Ascending aorta (tissue), 2 donors: ENCODE measurements at regions of chr13 and their contacts with region 1.

Region 1: DNA sequence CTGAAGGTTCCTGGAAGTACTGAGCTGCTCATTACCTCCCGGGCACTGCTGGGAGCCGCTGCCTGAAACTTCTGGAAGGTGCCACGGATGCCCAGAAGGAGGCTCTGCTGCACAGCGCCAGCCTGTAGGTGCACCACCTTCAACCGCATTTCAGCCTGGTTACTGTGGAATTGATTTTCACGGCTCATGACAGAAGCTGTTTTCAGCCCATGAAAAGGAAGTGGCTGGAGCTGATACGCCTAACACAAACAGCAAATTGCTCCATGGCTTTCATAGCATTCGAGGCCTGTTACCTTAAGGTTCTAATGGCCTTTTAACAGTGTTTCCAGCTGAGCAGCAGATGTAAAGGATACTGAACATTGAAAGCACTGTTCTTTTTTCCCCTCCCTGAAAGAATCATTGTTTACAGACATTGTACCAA is 22.0 kb downstream of the GPC6 start:
- DNase-seq: peak in 1 of 2 donors; percentile 75
- H3K4me3 ChIP-seq: no peak overlapping the region
- H3K27ac ChIP-seq: peak overlapping the region in 1 of 2 donors; percentile 24
- H3K4me1 ChIP-seq: no peaks in the 10 kb centered on the region
- H3K27me3 ChIP-seq: no peaks in the 10 kb centered on the region
- CTCF ChIP-seq: peak in 1 of 3 experiments; percentile 33

Region 2: DNA sequence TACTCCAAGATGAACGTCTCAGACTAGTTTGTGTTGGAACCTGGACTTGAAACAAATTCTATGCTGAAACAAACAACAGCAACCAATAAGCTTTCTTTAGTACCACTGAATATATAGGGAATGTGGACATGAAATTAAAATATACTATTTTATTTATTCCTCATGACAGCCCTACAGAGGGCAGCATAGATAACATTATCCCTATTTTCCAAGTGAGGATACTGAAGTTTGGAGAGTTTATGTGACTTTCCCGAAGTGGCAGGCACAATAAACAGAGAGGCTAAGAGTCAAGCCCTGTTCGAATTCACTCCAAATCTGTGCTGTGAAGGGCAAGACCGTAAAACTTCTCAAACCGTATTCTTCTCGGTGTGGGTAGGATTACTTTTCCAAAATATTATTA is 531.9 kb before region 1 on chr13:
- intact Hi-C with region 1: loop called (anchors 5 kb)
- DNase-seq: no peak
- H3K4me3 ChIP-seq: no peak overlapping the region
- H3K27ac ChIP-seq: no peak overlapping the region
- H3K4me1 ChIP-seq: no peaks in the 10 kb centered on the region
- H3K27me3 ChIP-seq: no peaks in the 10 kb centered on the region
- CTCF ChIP-seq: peak in 2 of 3 experiments; percentile 28 to 32

Region 3: DNA sequence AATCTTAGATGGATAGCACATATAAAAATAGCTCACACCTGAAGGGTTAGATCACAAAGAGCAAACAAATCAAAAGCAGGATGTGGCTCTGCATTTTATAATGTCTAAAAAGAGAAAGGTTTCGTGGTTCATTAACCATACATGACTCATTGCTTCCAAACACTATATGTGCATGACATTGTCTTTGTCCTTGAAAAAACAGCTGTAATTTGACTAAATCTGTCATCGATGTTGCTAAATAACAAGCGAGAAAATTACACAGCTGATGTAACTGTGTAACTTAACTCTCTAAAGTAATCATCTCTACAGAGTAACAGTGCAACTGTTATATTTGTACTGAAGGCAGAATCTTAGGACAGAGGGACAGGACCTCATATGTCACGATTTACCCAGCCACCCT is 405.1 kb before region 1 on chr13:
- intact Hi-C with region 1: loop called (anchors 5 kb)
- DNase-seq: no peak
- H3K4me3 ChIP-seq: no peak overlapping the region
- H3K27ac ChIP-seq: no peak overlapping the region
- H3K4me1 ChIP-seq: peaks cover 0 to 20% of the 10 kb centered on the region in 2 donors
- H3K27me3 ChIP-seq: no peaks in the 10 kb centered on the region
- CTCF ChIP-seq: no peak

Region 4: GRCh38 chr13:93108111-93108601 is 140.5 kb before region 1 on chr13:
- intact Hi-C with region 1: no loop called
- DNase-seq: no peak
- H3K4me3 ChIP-seq: no peak overlapping the region
- H3K27ac ChIP-seq: no peak overlapping the region
- H3K4me1 ChIP-seq: no peaks in the 10 kb centered on the region
- H3K27me3 ChIP-seq: no peaks in the 10 kb centered on the region
- CTCF ChIP-seq: no peak

Region 5: DNA sequence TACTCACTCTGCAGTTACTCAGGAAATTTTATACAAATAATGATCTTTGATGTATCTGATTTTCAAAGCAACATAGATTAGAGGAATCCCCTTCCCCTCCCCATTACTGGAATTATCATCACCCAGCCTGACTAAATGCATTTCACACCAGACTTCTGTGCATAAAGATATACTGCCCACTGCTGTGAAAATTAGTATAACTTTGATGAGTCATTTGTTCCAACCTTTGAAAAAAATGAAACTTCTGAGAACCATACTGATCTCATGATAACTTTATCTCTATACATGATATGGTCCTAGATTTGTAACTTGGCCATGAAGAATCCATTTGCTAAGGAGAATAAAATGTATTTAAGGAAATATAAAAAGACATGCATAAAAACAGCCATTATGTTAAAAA is 41.9 kb after region 1 on chr13:
- intact Hi-C with region 1: no loop called
- DNase-seq: no peak
- H3K4me3 ChIP-seq: no peak overlapping the region
- H3K27ac ChIP-seq: no peak overlapping the region
- H3K4me1 ChIP-seq: no peaks in the 10 kb centered on the region
- H3K27me3 ChIP-seq: no peaks in the 10 kb centered on the region
- CTCF ChIP-seq: no peak

Region 6: DNA sequence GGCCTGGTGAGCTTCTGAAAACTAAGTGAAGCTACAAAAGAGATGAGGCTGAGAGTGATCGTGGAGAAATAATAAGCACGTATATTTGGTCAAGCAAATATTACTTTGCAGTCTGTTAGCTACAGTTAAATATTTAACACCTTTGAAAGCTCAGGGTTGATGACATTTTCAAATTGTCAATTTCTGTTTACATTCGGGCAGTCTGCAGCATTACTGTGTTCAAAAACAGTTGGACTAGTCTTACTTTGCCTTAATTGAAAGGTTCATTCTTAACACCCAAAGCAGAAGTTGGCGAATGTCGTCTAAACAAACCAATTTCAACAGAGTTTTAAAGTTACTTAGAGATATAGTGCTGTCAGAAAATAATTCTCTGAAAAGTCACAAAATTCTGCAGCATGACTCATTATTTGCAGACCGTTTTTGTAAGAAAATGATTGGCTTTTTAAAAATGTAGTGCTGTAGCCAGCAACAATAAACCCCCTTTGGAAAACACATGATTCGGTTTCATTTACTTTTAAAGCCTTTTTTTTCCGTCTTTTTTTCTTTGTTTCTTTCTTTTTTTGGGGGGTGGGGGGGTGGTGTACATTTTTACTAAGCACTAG is 527.0 kb after region 1 on chr13:
- intact Hi-C with region 1: loop called (anchors 5 kb)
- DNase-seq: no peak
- H3K4me3 ChIP-seq: no peak overlapping the region
- H3K27ac ChIP-seq: peak overlapping the region in 1 of 2 donors; percentile 66
- H3K4me1 ChIP-seq: peaks cover 0 to 17% of the 10 kb centered on the region in 2 donors
- H3K27me3 ChIP-seq: no peaks in the 10 kb centered on the region
- CTCF ChIP-seq: no peak

Region 7: GRCh38 chr13:93951153-93951552 is 702.5 kb after region 1 on chr13:
- intact Hi-C with region 1: loop called (anchors 10 kb)
- DNase-seq: no peak
- H3K4me3 ChIP-seq: no peak overlapping the region
- H3K27ac ChIP-seq: no peak overlapping the region
- H3K4me1 ChIP-seq: no peaks in the 10 kb centered on the region
- H3K27me3 ChIP-seq: no peaks in the 10 kb centered on the region
- CTCF ChIP-seq: peak in 1 of 3 experiments; percentile 10

Region 8: GRCh38 chr13:94170145-94170571 is 921.5 kb after region 1 on chr13:
- intact Hi-C with region 1: loop called (anchors 10 kb)
- DNase-seq: peak in 1 of 2 donors; percentile 79
- H3K4me3 ChIP-seq: no peak overlapping the region
- H3K27ac ChIP-seq: peak overlapping the region in 1 of 2 donors; percentile 55
- H3K4me1 ChIP-seq: peaks cover 0 to 9% of the 10 kb centered on the region in 2 donors
- H3K27me3 ChIP-seq: no peaks in the 10 kb centered on the region
- CTCF ChIP-seq: no peak

Region 9: DNA sequence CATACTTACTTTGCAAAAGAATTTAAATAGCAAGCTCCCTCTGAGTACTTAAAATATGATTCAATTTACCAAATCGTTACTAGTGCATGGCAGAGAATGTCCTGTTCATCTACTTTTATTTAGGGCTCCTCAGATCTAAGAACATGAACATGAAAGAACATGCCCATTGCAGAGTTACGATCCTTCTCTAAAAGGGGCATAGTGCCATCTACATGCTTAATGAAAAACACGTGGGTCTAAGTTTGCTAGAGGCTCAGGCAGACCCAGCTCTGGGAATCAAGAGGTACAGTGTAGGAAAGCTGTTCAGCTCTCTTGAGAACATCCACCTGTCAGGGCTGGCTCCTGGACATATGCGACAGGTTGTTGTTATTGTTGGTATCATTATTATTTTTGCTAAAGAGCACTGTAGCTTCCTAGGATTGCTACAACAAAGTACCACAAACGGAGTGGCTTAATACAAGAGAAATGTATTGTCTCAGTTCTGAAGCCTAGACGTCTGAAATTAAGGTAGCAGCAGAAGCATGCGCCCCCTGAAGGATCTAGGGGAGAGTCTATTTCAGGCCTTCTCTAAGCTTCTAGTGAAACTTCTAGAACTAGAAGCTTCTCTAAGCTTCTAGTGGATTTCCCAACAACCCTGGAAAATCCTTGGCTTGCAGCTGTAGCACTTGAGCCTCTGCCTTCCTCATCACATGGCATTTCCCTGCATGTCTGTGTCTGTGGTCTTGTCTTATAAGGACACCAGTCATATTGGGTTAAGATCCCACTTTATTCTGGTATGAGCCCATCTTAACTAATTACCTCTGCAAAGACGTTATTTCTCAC is 1096.9 kb after region 1 on chr13:
- intact Hi-C with region 1: loop called (anchors 5 kb)
- DNase-seq: no peak
- H3K4me3 ChIP-seq: no peak overlapping the region
- H3K27ac ChIP-seq: no peak overlapping the region
- H3K4me1 ChIP-seq: peaks cover 0 to 7% of the 10 kb centered on the region in 2 donors
- H3K27me3 ChIP-seq: no peaks in the 10 kb centered on the region
- CTCF ChIP-seq: peak in 1 of 3 experiments; percentile 3